ENCODE measurements at regions of chr5 and their contacts with region 1.

Region 1: GRCh38 chr5:28430565-28431178 is 1392.3 kb upstream of the CDH9 start:
- DNase-seq: no peak
- H3K4me3 ChIP-seq: no peak overlapping the region
- H3K27ac ChIP-seq: no peak overlapping the region
- H3K4me1 ChIP-seq: no peaks in the 10 kb centered on the region
- H3K27me3 ChIP-seq: no peaks in the 10 kb centered on the region
- CTCF ChIP-seq: no peak
- POLR2A ChIP-seq: no peak

Region 2: GRCh38 chr5:28493456-28493855 is 62.8 kb after region 1 on chr5:
- intact Hi-C with region 1: loop called (anchors 2 kb)
- DNase-seq: no peak
- H3K4me3 ChIP-seq: no peak overlapping the region
- H3K27ac ChIP-seq: no peak overlapping the region
- H3K4me1 ChIP-seq: no peaks in the 10 kb centered on the region
- H3K27me3 ChIP-seq: no peaks in the 10 kb centered on the region
- CTCF ChIP-seq: no peak
- POLR2A ChIP-seq: no peak